A549 (cell line): ENCODE measurements at regions of chr1 and their contacts with region 1.

Region 1: GRCh38 chr1:78114034-78114956 is 68.5 kb downstream of the GIPC2 start:
- DNase-seq: peak; percentile 48 to 70
- ATAC-seq: peak; percentile 86 to 88
- H3K4me3 ChIP-seq: no peak overlapping the region
- H3K27ac ChIP-seq: peak overlapping the region; percentile 3 to 40; a peak in 3 of 6 replicates
- H3K4me1 ChIP-seq: no peaks in the 10 kb centered on the region
- CTCF ChIP-seq: peak; percentile 97
- EP300 ChIP-seq: no peak
- POLR2A ChIP-seq: no peak
- RAD21 ChIP-seq: peak; percentile 94 to 96

Region 2: DNA sequence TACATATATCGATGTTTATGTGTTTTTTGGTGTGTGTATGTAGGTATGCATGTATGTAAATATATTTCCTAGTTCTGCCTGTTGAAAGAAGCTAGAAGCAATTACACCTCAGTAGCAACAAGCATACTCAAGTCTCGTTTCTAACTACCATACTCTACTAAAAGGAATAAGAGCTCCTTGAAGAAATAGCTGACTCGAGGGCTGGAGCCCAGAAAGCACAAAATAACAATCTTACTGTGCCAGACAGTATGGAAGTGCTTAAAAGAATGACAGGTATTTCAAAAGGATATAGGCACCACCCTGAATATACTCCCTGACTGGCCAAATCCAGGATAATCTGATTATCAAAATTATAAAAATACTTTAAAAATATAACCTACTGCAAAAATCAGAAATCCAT is 158.6 kb before region 1 on chr1:
- CTCF ChIA-PET with region 1: interaction called, 10 read pairs
- POLR2A ChIA-PET with region 1: no interaction called
- DNase-seq: no peak
- ATAC-seq: no peak
- H3K4me3 ChIP-seq: no peak overlapping the region
- H3K27ac ChIP-seq: no peak overlapping the region
- H3K4me1 ChIP-seq: no peaks in the 10 kb centered on the region
- CTCF ChIP-seq: no peak
- EP300 ChIP-seq: no peak
- POLR2A ChIP-seq: no peak
- RAD21 ChIP-seq: no peak

Region 3: DNA sequence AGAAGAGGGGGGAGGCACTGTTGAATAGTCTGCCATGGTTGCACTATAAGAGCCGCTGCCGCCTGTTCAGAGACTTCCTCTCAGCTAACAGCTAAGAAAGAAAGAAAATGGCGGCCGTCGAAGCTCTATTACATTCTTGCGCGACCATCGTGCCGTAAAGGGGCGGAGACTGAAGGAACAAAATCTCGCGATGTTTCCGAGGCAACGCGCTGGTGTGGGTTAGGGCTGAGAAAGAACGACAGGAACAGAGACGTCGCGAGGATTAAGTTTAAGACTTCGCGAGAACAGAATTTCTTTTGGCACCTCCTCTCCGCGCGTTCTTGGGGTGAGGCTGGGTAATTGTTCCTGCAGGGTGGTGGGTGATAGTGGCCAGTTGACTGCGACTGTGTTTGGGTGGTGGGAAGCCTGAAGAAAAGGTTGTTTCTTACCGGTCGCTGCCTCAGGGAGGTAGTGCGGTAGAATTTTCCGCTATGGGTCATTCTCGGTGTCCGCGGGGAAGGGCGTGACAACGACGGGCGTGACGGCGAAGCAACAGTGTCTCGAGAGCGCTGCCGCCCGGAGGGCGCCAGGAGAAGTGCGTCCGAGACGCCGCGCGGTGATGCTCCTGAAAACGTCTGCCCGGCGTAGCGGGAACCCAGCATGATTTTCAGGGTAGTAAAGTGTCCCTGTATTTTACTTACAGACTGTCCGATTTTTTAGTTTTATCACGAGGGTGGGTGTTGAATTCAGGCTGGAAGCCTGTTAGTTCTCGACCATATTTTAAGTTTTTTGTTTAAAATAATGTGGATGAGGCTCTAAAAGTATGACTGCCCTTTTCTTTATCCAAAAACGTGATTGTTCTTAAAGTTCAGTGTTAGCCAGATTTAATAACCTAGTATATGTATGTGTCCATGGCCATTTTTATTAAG is 135.1 kb before region 1 on chr1 and contains the start of gene FUBP1:
- CTCF ChIA-PET with region 1: interaction called, 28 read pairs
- POLR2A ChIA-PET with region 1: interaction called, 5 read pairs
- DNase-seq: peak; percentile 70 to 98
- ATAC-seq: peak; percentile 90 to 93
- H3K4me3 ChIP-seq: peak within 1 kb of the TSS; percentile 71
- H3K27ac ChIP-seq: peak within 1 kb of the TSS; percentile 88 to 92
- H3K4me1 ChIP-seq: peaks cover 48% of the 10 kb centered on the region
- CTCF ChIP-seq: peak; percentile 41
- EP300 ChIP-seq: no peak
- POLR2A ChIP-seq: peak; percentile 59
- RAD21 ChIP-seq: peak in 1 of 2 experiments; percentile 5; a peak in 1 of 5 replicates
- polyA plus RNA-seq, gene FUBP1: 126 and 183 TPM in 2 replicates

Region 4: GRCh38 chr1:78019018-78019417 is 95.3 kb before region 1 on chr1:
- CTCF ChIA-PET with region 1: interaction called, 10 read pairs
- POLR2A ChIA-PET with region 1: interaction called, 3 read pairs
- DNase-seq: no peak
- ATAC-seq: no peak; a peak in 1 of 6 replicates
- H3K4me3 ChIP-seq: no peak overlapping the region
- H3K27ac ChIP-seq: no peak overlapping the region
- H3K4me1 ChIP-seq: no peaks in the 10 kb centered on the region
- CTCF ChIP-seq: no peak
- EP300 ChIP-seq: no peak
- POLR2A ChIP-seq: no peak
- RAD21 ChIP-seq: no peak

Region 5: GRCh38 chr1:78101514-78101913 is 12.8 kb before region 1 on chr1:
- CTCF ChIA-PET with region 1: interaction called, 57 read pairs
- POLR2A ChIA-PET with region 1: no interaction called
- DNase-seq: peak; percentile 24 to 63
- ATAC-seq: peak; percentile 82 to 88
- H3K4me3 ChIP-seq: no peak overlapping the region
- H3K27ac ChIP-seq: peak overlapping the region; percentile 67 to 84
- H3K4me1 ChIP-seq: peaks cover 21% of the 10 kb centered on the region
- CTCF ChIP-seq: no peak
- EP300 ChIP-seq: no peak; a peak in 1 of 5 replicates
- POLR2A ChIP-seq: no peak
- RAD21 ChIP-seq: no peak